ENCODE measurements at regions of chr17 and their contacts with region 1.

Region 1: GRCh38 chr17:64506576-64507477 is at the start of gene CEP95:
- DNase-seq: peak; percentile 94 to 98 (median 95)
- ATAC-seq: peak; percentile 81
- H3K4me3 ChIP-seq: peak within 1 kb of the TSS; percentile 99
- H3K4me1 ChIP-seq: peaks cover 28% of the 10 kb centered on the region
- CTCF ChIP-seq: no peak
- total RNA-seq, gene CEP95: 37.1 to 50.8 (median 43.3) TPM

Region 2: GRCh38 chr17:64732336-64733009 is 225.6 kb after region 1 on chr17:
- intact Hi-C with region 1: loop called in 1 of 2 experiments (anchors 5 kb)
- DNase-seq: no peak
- ATAC-seq: peak; percentile 16
- H3K4me3 ChIP-seq: no peak overlapping the region
- H3K4me1 ChIP-seq: no peaks in the 10 kb centered on the region
- CTCF ChIP-seq: no peak